ENCODE measurements at regions of chr1 and their contacts with region 1.

Region 1: GRCh38 chr1:2381741-2382620 is 9.4 kb downstream of the MORN1 start:
- DNase-seq: peak; percentile 83 to 94
- H3K4me3 ChIP-seq: no peak overlapping the region
- H3K27ac ChIP-seq: no peak overlapping the region
- H3K4me1 ChIP-seq: peaks cover 6 to 13% (median 10%) of the 10 kb centered on the region in 4 donors
- H3K27me3 ChIP-seq: no peaks in the 10 kb centered on the region
- CTCF ChIP-seq: peak in 6 of 7 experiments; percentile 56 to 96 (median 88)
- EP300 ChIP-seq: no peak
- POLR2A ChIP-seq: no peak

Region 2: DNA sequence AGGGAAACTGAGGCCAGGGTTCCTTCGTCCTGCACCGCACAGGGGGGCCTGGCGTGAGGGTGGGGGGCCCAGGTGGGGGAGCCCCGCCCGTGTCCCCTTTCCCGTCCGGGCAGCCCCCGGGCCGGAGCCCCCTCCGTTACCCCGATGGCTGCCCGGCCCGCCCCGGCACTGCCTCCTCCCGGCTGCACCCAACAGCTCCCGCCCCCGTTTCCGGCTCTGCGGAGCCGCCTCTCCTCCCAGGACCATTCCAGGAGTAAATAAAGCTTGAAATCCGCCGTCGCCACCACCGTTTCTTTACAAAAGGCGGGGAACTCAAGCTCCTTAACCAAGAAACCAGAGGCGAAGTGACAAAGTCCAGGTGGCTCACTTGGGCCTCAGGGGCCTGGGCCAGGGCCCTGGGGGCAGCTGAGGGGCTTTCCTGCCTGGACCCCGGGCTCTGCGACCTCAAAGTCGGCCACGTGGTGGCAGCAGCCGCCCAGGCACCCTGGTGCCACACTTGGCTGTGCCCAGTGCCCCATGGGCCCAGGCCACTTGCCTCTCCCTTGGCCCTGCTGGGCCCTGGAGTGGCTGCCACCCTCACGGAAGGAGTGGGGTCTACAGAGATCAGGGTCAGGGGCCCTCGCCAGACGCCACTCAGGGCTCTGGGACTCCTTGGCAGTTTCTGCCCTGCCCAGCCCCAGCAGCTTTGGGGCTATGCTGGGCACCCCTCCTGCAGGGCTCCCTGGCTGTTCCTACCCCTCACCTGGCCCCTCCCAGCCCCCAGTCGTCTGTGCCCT is 186.9 kb before region 1 on chr1:
- intact Hi-C with region 1: loop called (anchors 5 kb)
- DNase-seq: peak; percentile 92 to 96
- H3K4me3 ChIP-seq: peak overlapping the region; percentile 61 to 73 (median 70)
- H3K27ac ChIP-seq: peak overlapping the region; percentile 88 to 98 (median 94)
- H3K4me1 ChIP-seq: peaks cover 65 to 80% (median 73%) of the 10 kb centered on the region in 4 donors
- H3K27me3 ChIP-seq: no peaks in the 10 kb centered on the region
- CTCF ChIP-seq: peak in 5 of 7 experiments; percentile 72 to 97 (median 81)
- EP300 ChIP-seq: no peak
- POLR2A ChIP-seq: no peak

Region 3: DNA sequence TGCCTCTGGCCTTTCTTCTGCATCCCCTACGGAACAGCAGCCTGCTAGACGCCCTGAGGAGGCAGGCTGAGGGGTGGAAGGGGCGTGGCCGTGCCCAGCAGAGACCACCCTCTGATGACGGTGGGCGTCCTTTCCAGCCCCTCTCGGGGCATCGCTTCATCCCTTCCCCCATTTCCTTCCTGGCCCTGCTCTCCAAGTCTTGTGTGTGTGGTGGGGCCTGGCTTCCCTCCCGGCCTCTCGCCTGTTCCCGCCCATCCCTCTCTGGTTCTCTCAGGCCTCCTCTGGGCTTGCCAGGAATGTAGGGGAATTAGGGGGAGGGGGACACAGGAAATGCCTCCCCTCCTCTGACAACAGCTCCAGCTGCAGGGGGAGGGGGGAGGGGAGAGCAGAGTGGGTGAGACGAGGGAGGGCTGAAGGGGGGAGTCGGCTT is 102.8 kb before region 1 on chr1:
- intact Hi-C with region 1: no loop called
- DNase-seq: peak in 1 of 2 donors; percentile 97
- H3K4me3 ChIP-seq: no peak overlapping the region
- H3K27ac ChIP-seq: peak overlapping the region; percentile 37 to 77 (median 54)
- H3K4me1 ChIP-seq: peaks cover 61 to 78% (median 71%) of the 10 kb centered on the region in 4 donors
- H3K27me3 ChIP-seq: no peaks in the 10 kb centered on the region
- CTCF ChIP-seq: no peak
- EP300 ChIP-seq: no peak
- POLR2A ChIP-seq: no peak

Region 4: GRCh38 chr1:2611031-2611501 is 229.1 kb after region 1 on chr1:
- intact Hi-C with region 1: no loop called
- DNase-seq: peak; percentile 56 to 83
- H3K4me3 ChIP-seq: peak overlapping the region in 3 of 4 donors; percentile 18 to 27 (median 22)
- H3K27ac ChIP-seq: no peak overlapping the region
- H3K4me1 ChIP-seq: peaks cover 0 to 20% (median 10%) of the 10 kb centered on the region in 4 donors
- H3K27me3 ChIP-seq: peaks cover 0 to 46% (median 12%) of the 10 kb centered on the region in 3 donors
- CTCF ChIP-seq: no peak
- EP300 ChIP-seq: no peak
- POLR2A ChIP-seq: no peak